A549 (cell line): ENCODE measurements at regions of chr2 and their contacts with region 1.

Region 1: DNA sequence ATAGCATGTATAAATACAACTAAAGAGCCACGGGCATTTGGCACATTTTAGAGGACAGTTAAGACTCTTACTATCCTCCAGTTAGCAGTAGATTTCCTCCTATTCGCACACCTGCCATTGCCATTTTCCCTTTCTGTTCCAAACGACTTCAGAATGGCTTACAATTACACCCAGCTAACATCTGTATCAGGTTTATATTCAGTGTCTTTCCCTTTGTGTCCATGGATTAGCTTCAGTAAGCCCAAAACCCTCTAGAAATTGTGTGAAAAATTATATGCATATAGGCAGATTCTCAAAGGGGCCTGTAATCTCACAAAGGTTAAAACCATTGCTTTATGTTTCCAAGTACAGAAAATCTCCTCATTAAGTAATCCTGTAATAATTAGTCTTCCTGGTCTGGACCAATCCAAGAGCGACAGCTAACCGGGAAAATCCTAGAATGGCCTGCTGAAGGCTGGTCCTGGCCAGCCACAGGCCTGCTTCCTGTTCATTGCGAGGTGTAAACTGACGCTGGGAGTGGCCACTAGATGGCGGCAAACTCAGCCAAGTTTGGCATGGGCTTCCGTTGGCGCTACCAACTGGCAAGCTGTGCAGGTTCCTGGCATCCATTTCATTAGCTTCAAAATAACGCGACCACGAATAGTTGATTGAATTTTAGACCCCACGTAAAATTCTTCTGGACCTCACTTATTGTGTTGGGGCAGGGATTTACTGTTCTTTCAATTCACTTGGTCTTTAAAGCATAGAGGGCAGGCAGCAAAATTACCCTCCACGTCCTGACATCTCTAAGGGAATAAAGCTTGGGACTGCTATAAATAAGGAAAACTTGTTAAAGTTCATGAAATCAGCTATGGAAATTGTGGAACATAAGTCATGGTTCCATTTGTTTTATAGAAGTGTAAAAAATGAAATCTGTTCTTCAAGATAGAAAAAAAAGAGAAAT is 17.1 kb downstream of the ARHGAP25 start:
- DNase-seq: peak; percentile 82 to 91
- ATAC-seq: peak; percentile 99 to 100
- H3K4me3 ChIP-seq: no peak overlapping the region
- H3K27ac ChIP-seq: no peak overlapping the region
- H3K4me1 ChIP-seq: no peaks in the 10 kb centered on the region
- CTCF ChIP-seq: peak; percentile 98
- EP300 ChIP-seq: no peak
- POLR2A ChIP-seq: no peak
- RAD21 ChIP-seq: peak; percentile 92 to 93

Region 2: DNA sequence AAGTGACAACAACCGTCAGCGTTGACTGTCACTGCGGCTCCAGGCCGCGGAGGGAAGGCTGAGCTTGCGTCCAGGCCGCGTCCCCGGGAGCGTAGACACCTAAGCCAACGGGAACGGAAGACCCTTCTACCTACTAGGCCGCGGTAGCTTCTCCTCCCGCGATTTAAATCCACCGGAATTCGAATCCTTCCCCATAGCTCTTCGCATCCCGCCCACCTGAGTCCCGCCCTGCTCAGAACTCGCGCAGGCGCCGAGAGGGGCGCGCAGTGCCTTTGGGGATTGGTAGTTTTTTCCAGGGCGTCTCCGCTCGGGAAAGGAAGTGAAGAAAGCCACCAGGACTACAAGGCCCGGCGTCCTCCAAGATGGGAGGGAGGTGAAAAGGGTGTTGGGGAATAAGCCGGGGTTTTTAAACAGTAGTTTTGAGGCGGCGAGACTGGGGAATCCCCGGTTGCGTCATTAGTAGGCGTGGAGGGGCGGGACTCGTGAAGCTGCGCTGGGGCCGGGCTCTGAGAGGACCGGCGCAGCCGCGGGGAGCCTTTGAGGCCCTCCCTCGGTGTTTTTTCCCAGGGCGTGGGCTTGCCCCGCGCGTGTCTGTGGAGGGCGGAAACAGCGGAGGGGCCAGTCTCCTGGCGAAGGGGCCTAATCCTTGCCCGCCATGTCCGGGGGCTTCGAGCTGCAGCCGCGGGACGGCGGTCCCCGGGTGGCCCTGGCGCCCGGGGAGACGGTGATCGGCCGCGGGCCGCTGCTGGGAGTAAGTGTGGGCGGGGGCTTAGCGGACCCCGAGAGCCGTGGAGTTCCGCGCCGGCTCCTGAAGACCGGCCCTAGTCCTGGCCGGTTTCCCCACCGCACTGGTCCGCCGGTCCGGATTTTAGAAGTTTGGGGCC is 284.3 kb before region 1 on chr2 and contains the starts of genes APLF and FBXO48:
- CTCF ChIA-PET with region 1: interaction called, 35 read pairs
- POLR2A ChIA-PET with region 1: no interaction called
- DNase-seq: peak; percentile 97 to 99
- ATAC-seq: peak; percentile 95 to 99
- H3K4me3 ChIP-seq: peak within 1 kb of the TSS; percentile 78
- H3K27ac ChIP-seq: peak within 1 kb of the TSS; percentile 85 to 92
- H3K4me1 ChIP-seq: peaks cover 22% of the 10 kb centered on the region
- CTCF ChIP-seq: no peak
- EP300 ChIP-seq: no peak
- POLR2A ChIP-seq: peak; percentile 63
- RAD21 ChIP-seq: no peak
- polyA plus RNA-seq, gene APLF: 2.1 and 2.8 TPM in 2 replicates
- polyA plus RNA-seq, gene FBXO48: 1.4 and 2.1 TPM in 2 replicates

Region 3: GRCh38 chr2:68721482-68722101 is 30.1 kb before region 1 on chr2:
- CTCF ChIA-PET with region 1: interaction called, 22 read pairs
- POLR2A ChIA-PET with region 1: no interaction called
- DNase-seq: no peak
- ATAC-seq: peak in 1 of 2 experiments; percentile 16; a peak in 3 of 6 replicates
- H3K4me3 ChIP-seq: no peak overlapping the region
- H3K27ac ChIP-seq: no peak overlapping the region
- H3K4me1 ChIP-seq: 0 out of 3 replicates have a peak, but pooled peaks cover 4% of the 10 kb centered on the region
- CTCF ChIP-seq: no peak
- EP300 ChIP-seq: no peak
- POLR2A ChIP-seq: no peak
- RAD21 ChIP-seq: no peak

Region 4: DNA sequence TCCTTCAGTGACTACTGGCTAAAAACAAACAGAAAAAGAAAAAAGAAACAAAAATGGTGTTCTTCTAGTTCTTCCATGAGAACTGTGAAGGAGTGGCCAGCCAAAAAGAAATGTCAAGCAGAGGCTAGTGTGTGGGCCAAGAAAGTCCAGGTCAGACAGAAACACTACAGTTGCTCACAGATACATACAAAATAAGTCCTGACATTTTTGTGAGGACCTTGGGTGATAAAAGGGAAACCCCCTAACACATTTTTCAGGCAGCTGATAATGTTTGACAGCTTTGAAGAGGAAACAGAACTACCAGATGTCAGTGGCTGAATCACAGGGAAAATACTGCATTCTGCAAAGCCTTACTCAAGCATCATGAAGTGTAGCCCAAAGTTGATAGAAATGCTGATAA is 11.0 kb after region 1 on chr2:
- CTCF ChIA-PET with region 1: interaction called, 47 read pairs
- POLR2A ChIA-PET with region 1: no interaction called
- DNase-seq: no peak
- ATAC-seq: no peak
- H3K4me3 ChIP-seq: no peak overlapping the region
- H3K27ac ChIP-seq: no peak overlapping the region
- H3K4me1 ChIP-seq: no peaks in the 10 kb centered on the region
- CTCF ChIP-seq: no peak
- EP300 ChIP-seq: no peak
- POLR2A ChIP-seq: no peak
- RAD21 ChIP-seq: no peak

Region 5: GRCh38 chr2:68813596-68813995 is 61.9 kb after region 1 on chr2:
- CTCF ChIA-PET with region 1: interaction called, 15 read pairs
- POLR2A ChIA-PET with region 1: no interaction called
- DNase-seq: no peak
- ATAC-seq: no peak
- H3K4me3 ChIP-seq: no peak overlapping the region
- H3K27ac ChIP-seq: no peak overlapping the region
- H3K4me1 ChIP-seq: 0 out of 3 replicates have a peak, but pooled peaks cover 8% of the 10 kb centered on the region
- CTCF ChIP-seq: no peak
- EP300 ChIP-seq: no peak
- POLR2A ChIP-seq: no peak
- RAD21 ChIP-seq: no peak

Region 6: GRCh38 chr2:68909793-68910674 is 158.4 kb after region 1 on chr2:
- CTCF ChIA-PET with region 1: interaction called, 25 read pairs
- POLR2A ChIA-PET with region 1: no interaction called
- DNase-seq: peak; percentile 60 to 85
- ATAC-seq: peak in 1 of 2 experiments; percentile 66; a peak in 3 of 6 replicates
- H3K4me3 ChIP-seq: no peak overlapping the region
- H3K27ac ChIP-seq: peak overlapping the region in 1 of 2 experiments; percentile 85; a peak in 4 of 6 replicates
- H3K4me1 ChIP-seq: peaks cover 25% of the 10 kb centered on the region
- CTCF ChIP-seq: peak; percentile 79
- EP300 ChIP-seq: no peak
- POLR2A ChIP-seq: no peak
- RAD21 ChIP-seq: peak; percentile 76 to 80

Region 7: GRCh38 chr2:68936427-68936826 is 184.8 kb after region 1 on chr2:
- CTCF ChIA-PET with region 1: interaction called, 35 read pairs
- POLR2A ChIA-PET with region 1: no interaction called
- DNase-seq: no peak
- ATAC-seq: peak; percentile 37 to 68; a peak in 3 of 6 replicates
- H3K4me3 ChIP-seq: no peak overlapping the region
- H3K27ac ChIP-seq: peak overlapping the region; percentile 1 to 72; a peak in 4 of 6 replicates
- H3K4me1 ChIP-seq: peaks cover 13% of the 10 kb centered on the region
- CTCF ChIP-seq: no peak
- EP300 ChIP-seq: no peak
- POLR2A ChIP-seq: no peak
- RAD21 ChIP-seq: no peak